ENCODE measurements at regions of chr5 and their contacts with region 1.

Region 1: GRCh38 chr5:32329308-32329834 is 16.6 kb upstream of the MTMR12 start:
- DNase-seq: peak; percentile 56 to 76
- H3K4me3 ChIP-seq: no peak overlapping the region
- H3K27ac ChIP-seq: no peak overlapping the region
- H3K4me1 ChIP-seq: no peaks in the 10 kb centered on the region
- H3K27me3 ChIP-seq: no peaks in the 10 kb centered on the region
- CTCF ChIP-seq: peak; percentile 78 to 87 (median 81)
- EP300 ChIP-seq: no peak
- POLR2A ChIP-seq: no peak
- RAD21 ChIP-seq: peak; percentile 86 to 92

Region 2: GRCh38 chr5:32232441-32233219 is 96.7 kb before region 1 on chr5:
- CTCF ChIA-PET with region 1: interaction called, 117 read pairs
- POLR2A ChIA-PET with region 1: no interaction called
- DNase-seq: peak; percentile 19 to 86
- H3K4me3 ChIP-seq: no peak overlapping the region
- H3K27ac ChIP-seq: no peak overlapping the region
- H3K4me1 ChIP-seq: peaks cover 0 to 3% (median 1%) of the 10 kb centered on the region in 4 experiments; a peak in 2 of 7 replicates
- H3K27me3 ChIP-seq: no peaks in the 10 kb centered on the region
- CTCF ChIP-seq: peak; percentile 72 to 87 (median 81)
- EP300 ChIP-seq: no peak
- POLR2A ChIP-seq: no peak
- RAD21 ChIP-seq: peak; percentile 82 to 87

Region 3: DNA sequence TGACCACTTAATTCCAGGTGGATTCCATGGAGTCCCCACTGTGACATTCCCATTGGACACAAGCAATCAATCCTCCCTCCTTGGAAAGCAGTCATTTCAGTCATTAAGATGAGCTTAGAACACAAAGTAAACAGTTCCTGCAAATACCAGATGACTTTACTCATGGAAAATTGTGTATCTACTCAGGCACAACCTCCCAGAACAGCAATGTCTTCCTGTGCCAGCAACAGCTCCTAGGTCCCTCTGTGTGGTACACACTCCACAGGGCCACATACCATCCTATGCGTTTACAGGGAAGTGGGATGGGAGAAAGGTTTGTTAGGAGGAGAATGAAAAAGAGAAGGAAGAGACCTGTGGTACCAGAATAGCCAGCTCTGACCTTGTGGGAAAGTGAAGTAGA is 70.3 kb before region 1 on chr5:
- CTCF ChIA-PET with region 1: interaction called, 14 read pairs
- POLR2A ChIA-PET with region 1: no interaction called
- DNase-seq: no peak
- H3K4me3 ChIP-seq: no peak overlapping the region
- H3K27ac ChIP-seq: no peak overlapping the region
- H3K4me1 ChIP-seq: no peaks in the 10 kb centered on the region
- H3K27me3 ChIP-seq: no peaks in the 10 kb centered on the region
- CTCF ChIP-seq: no peak
- EP300 ChIP-seq: no peak
- POLR2A ChIP-seq: no peak
- RAD21 ChIP-seq: no peak

Region 4: DNA sequence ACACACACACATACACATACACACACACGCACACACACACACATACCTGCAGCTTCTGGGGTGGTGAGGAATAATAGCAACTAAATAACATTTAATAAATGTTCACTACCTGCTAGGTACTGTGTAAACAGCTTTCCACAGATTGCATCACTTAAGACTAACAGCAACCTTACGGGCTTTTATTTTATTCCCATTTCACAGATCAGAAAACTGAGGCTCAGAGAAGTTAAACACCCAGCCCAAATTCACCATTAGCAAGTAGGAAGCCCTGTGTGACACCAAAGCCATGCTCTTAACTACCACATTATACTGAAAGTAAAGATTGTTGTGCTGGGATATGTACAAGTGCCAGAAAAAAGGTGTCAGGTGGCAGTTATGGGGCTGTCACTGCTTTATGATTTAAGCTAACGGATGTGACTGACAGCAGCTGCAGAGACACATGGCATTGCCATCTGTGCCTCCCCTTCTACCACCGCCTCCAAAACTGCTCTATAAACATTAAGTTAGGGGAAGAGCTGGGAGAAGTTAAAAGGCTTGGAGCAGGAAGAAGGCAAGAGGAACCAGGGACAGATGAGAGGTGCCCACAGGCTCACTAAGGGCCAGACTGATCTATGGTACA is 30.2 kb before region 1 on chr5:
- CTCF ChIA-PET with region 1: interaction called, 16 read pairs
- POLR2A ChIA-PET with region 1: no interaction called
- DNase-seq: no peak
- H3K4me3 ChIP-seq: no peak overlapping the region
- H3K27ac ChIP-seq: no peak overlapping the region
- H3K4me1 ChIP-seq: peaks cover 6 to 15% (median 13%) of the 10 kb centered on the region in 4 experiments
- H3K27me3 ChIP-seq: no peaks in the 10 kb centered on the region
- CTCF ChIP-seq: no peak
- EP300 ChIP-seq: no peak
- POLR2A ChIP-seq: no peak
- RAD21 ChIP-seq: no peak